ENCODE measurements at regions of chr1 and their contacts with region 1.

Region 1: GRCh38 chr1:76294482-76295194 is 220.1 kb downstream of the ST6GALNAC3 start:
- DNase-seq: no peak
- ATAC-seq: peak; percentile 68
- H3K4me3 Mint-ChIP-seq: peak overlapping the region; percentile 11
- H3K27ac Mint-ChIP-seq: peak overlapping the region; percentile 86
- H3K4me1 Mint-ChIP-seq: peaks cover 66% of the 10 kb centered on the region
- H3K27me3 Mint-ChIP-seq: no peaks in the 10 kb centered on the region

Region 2: DNA sequence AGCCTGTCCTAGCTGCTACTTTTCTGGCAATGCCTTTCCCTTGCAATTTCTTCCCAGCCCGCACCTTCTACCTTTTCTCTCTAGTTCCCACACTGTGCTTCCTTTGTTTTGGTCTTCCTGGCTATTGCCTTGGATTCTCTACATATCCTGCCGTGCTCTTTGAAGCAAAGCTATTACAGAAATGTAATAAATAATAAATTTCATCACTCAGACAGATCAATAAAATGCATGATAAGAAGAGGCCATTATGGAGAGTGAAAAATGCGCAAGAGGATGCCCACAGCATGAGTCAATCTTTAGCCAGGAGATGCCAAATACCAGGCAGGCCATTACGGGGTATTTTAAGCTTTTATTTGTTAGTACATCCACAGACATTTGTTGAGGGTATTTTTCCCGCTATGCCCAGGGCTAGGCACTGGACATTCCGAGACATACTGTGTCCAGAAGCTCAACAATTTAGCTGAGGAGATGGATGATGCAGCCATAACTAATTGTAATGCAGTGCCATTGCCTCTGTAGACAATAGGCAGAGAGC is 56.5 kb before region 1 on chr1:
- CTCF ChIA-PET with region 1: no interaction called
- POLR2A ChIA-PET with region 1: no interaction called
- intact Hi-C with region 1: no loop called
- DNase-seq: no peak
- ATAC-seq: no peak
- H3K4me3 Mint-ChIP-seq: no peak overlapping the region
- H3K27ac Mint-ChIP-seq: no peak overlapping the region
- H3K4me1 Mint-ChIP-seq: peaks cover 2% of the 10 kb centered on the region
- H3K27me3 Mint-ChIP-seq: no peaks in the 10 kb centered on the region

Region 3: GRCh38 chr1:76254104-76255030 is 40.3 kb before region 1 on chr1:
- CTCF ChIA-PET with region 1: interaction called, 3 read pairs
- POLR2A ChIA-PET with region 1: no interaction called
- intact Hi-C with region 1: loop called (anchors 2 to 5 kb)
- DNase-seq: peak; percentile 47
- ATAC-seq: peak; percentile 52
- H3K4me3 Mint-ChIP-seq: no peak overlapping the region
- H3K27ac Mint-ChIP-seq: peak overlapping the region; percentile 44
- H3K4me1 Mint-ChIP-seq: peaks cover 57% of the 10 kb centered on the region
- H3K27me3 Mint-ChIP-seq: no peaks in the 10 kb centered on the region

Region 4: DNA sequence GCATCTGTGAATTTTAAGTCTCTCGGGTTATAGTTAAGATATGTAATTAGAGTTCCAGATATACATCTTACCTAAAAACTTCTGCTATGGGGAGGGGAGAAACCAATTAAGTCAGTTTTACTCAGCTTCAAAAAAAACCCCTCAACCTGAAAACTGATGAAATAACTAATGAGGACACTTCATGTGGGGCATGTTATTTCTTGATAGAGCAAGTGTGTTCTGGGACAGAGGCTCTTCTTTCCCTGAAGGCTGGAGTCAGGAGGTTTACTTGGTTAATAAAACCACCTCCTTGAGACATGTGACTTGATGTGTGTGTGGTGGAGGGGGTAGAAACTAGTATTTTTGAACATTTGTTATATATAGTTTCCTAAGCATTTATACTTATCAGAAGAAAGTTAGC is 259.6 kb after region 1 on chr1:
- CTCF ChIA-PET with region 1: no interaction called
- POLR2A ChIA-PET with region 1: no interaction called
- intact Hi-C with region 1: no loop called
- DNase-seq: no peak
- ATAC-seq: no peak
- H3K4me3 Mint-ChIP-seq: no peak overlapping the region
- H3K27ac Mint-ChIP-seq: no peak overlapping the region
- H3K4me1 Mint-ChIP-seq: no peaks in the 10 kb centered on the region
- H3K27me3 Mint-ChIP-seq: no peaks in the 10 kb centered on the region